Endothelial cell of umbilical vein (primary cell): ENCODE measurements at regions of chr16 and their contacts with region 1.

Region 1: DNA sequence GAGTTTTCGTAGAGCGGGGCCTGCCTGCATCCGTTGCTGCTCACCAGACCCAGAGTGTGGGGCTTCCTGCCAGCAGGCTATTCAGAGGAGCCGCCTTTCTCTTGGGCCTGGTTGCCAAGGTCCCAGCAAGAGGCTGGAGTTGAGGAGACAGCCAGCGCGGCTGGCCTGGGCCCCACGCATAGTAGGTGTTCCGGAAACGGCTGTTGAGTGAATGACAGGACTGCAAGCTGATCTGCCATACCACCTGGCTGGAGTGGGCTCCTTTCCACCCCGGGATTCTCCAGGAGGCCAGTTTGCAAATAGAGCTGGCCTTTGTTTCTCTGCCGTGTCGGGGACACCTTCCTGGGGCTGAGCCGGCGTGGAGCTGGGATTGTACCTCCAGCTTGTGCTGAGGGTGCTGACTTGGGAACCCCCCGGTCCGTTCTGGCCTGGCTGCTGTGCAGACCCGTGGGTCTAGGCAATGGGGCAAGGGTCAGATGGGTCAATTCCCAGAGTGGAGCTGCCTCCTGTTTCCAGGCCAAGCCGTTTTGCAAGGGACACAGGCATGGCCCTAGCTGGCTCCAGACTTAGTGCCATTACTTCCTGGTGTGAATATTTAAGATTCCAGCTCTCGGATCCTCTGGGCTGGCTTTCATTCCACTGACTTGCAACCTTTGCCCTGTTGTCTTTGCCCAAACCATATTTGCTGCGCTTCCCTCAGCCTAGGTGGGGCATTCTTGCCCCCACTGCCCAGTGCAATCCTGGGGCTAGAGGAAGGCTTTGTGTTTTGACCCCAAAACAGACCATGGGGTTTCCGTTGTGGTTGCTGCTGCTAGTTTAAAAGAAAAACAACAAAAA is 68.8 kb downstream of the CMIP start:
- DNase-seq: peak; percentile 84
- H3K4me3 ChIP-seq: no peak overlapping the region
- H3K27ac ChIP-seq: peak overlapping the region; percentile 51
- H3K4me1 ChIP-seq: peaks cover 66% of the 10 kb centered on the region
- H3K27me3 ChIP-seq: no peaks in the 10 kb centered on the region
- CTCF ChIP-seq: no peak
- POLR2A ChIP-seq: no peak

Region 2: GRCh38 chr16:81469710-81470535 is 43.5 kb before region 1 on chr16:
- CTCF ChIA-PET with region 1: interaction called, 5 read pairs
- POLR2A ChIA-PET with region 1: no interaction called
- dilution Hi-C with region 1: no loop called
- intact Hi-C with region 1: loop called (anchors 1 kb)
- DNase-seq: no peak
- H3K4me3 ChIP-seq: no peak overlapping the region
- H3K27ac ChIP-seq: no peak overlapping the region
- H3K4me1 ChIP-seq: peaks cover 22% of the 10 kb centered on the region
- H3K27me3 ChIP-seq: no peaks in the 10 kb centered on the region
- CTCF ChIP-seq: no peak
- POLR2A ChIP-seq: no peak

Region 3: DNA sequence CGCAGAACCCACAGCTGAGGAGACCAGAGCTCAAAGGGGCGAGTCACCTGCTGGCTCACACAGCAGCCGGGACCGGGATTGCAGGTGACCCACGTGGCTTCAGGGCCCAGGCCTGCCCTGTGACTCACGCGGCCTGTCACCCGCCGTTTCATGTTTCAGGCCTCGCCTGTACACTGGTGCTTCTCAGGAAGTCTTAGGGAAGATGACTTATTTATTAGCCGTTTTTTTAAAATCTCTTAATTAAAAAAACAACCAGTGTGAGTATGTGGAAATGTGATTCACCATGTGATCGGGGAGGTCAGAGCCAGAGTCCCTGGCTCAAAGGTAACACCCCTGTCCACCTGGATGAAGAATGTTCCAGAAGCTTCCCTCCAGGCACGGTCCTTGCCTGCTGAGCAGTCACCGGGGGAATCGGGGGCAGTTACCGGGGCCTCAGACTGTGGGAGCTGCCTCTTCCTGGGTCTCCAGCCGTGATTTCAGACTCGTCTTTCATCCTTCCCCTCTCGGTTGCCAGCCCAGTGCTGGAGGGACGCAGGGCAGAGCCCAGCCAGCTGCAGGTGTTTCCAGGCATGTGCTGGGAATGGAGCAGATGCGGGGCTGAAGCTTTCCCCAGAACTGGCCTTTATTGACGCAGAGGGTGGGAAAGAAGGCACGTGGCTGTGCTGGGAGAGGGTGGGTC is 19.5 kb before region 1 on chr16:
- CTCF ChIA-PET with region 1: interaction called, 3 read pairs
- POLR2A ChIA-PET with region 1: no interaction called
- dilution Hi-C with region 1: no loop called
- intact Hi-C with region 1: loop called (anchors 1 kb)
- DNase-seq: peak; percentile 94
- H3K4me3 ChIP-seq: no peak overlapping the region
- H3K27ac ChIP-seq: peak overlapping the region; percentile 96
- H3K4me1 ChIP-seq: peaks cover 80% of the 10 kb centered on the region
- H3K27me3 ChIP-seq: no peaks in the 10 kb centered on the region
- CTCF ChIP-seq: no peak
- POLR2A ChIP-seq: no peak

Region 4: GRCh38 chr16:81551151-81551808 is 37.9 kb after region 1 on chr16:
- CTCF ChIA-PET with region 1: no interaction called
- POLR2A ChIA-PET with region 1: no interaction called
- dilution Hi-C with region 1: no loop called
- intact Hi-C with region 1: loop called (anchors 2 kb)
- DNase-seq: peak; percentile 76
- H3K4me3 ChIP-seq: no peak overlapping the region
- H3K27ac ChIP-seq: peak overlapping the region; percentile 87
- H3K4me1 ChIP-seq: peaks cover 46% of the 10 kb centered on the region
- H3K27me3 ChIP-seq: no peaks in the 10 kb centered on the region
- CTCF ChIP-seq: no peak
- POLR2A ChIP-seq: no peak